ENCODE measurements at regions of chr19 and their contacts with region 1.

Region 1: DNA sequence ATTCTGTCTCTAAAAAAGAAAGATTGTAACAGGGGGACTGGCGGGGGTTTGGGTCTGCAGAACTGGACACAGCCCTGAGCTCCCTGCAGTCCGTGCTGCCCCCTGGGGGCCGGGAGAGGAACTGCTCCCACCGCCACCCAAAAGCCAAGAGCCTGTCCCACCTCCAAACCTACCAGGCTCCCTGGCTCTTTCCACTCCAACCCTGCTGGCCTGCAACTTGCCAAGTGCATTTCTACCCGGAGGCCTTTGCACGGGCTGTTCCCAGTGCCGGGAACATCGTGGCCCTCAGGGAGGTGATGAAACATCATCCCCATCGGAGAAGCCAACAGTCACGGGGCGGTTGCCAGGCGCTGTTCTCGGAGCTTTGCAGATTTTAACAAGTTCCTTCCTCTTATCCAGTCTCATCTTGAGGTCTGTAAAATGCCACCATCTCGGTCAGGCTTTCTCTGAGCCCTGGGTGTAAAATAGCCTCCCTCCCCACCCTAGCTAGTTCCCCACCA is 50.7 kb downstream of the SMIM24 start:
- DNase-seq: peak; percentile 38
- H3K4me3 ChIP-seq: no peak overlapping the region
- H3K27me3 ChIP-seq: no peaks in the 10 kb centered on the region
- CTCF ChIP-seq: peak; percentile 97

Region 2: GRCh38 chr19:3324321-3324856 is 105.2 kb before region 1 on chr19:
- CTCF ChIA-PET with region 1: interaction called, 41 read pairs
- POLR2A ChIA-PET with region 1: no interaction called
- DNase-seq: no peak
- H3K4me3 ChIP-seq: no peak overlapping the region
- H3K27me3 ChIP-seq: peaks cover 6% of the 10 kb centered on the region; the same call in 1 of the 2 replicates
- CTCF ChIP-seq: peak; percentile 83

Region 3: GRCh38 chr19:3336680-3337523 is 92.7 kb before region 1 on chr19:
- CTCF ChIA-PET with region 1: interaction called, 13 read pairs
- POLR2A ChIA-PET with region 1: no interaction called
- DNase-seq: no peak
- H3K4me3 ChIP-seq: no peak overlapping the region
- H3K27me3 ChIP-seq: no peaks in the 10 kb centered on the region
- CTCF ChIP-seq: no peak

Region 4: DNA sequence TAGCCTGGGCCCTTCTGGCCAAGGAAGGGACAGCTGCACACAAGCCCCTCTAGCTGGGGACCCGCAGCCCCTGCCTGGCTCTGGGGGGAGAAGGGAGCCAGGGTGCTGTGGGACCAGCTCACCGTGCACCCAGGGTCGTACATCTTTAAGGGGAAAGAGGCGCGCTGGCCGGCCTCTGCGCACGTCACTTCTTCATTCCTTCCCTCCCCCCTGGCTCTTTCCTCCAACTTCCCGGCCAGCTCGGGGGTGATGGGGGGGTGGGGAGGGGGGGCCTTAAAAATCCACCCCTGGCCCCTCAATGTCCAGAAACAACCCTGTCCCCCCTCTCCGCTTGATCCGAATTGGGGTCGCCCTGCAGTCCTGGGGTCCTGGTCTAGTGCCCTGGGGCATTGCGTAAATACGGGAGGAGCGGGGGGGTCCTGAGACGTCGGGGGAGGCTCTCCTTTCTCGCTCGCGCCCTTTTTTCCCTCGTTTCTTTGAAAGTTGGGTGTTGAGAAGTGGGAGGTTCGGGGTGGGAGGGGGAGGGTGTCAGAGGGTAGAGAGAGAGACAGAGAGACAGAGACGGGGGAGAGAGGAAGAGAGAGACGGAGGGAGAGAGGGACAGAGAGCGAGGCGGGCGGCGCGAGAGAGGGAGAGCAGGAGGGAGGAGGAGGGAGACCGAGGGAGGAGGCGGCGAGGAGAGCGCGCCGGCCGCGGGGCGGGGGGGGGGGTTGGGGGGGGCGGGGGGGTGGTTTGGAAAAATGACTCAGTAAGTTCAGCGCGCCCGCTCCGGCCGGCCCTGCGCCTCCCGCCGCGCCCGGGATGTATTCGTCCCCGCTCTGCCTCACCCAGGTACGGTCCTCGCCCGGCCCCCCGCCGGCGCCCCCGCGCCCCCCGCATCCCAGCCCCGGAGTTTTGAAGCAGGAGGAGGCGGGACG is 63.5 kb before region 1 on chr19 and contains the start of gene NFIC:
- CTCF ChIA-PET with region 1: interaction called, 11 read pairs
- POLR2A ChIA-PET with region 1: no interaction called
- DNase-seq: no peak
- H3K4me3 ChIP-seq: peak within 1 kb of the TSS; percentile 88
- H3K27me3 ChIP-seq: no peaks in the 10 kb centered on the region
- CTCF ChIP-seq: no peak
- polyA plus RNA-seq, gene NFIC: 3.7 and 5.0 TPM in 2 replicates

Region 5: GRCh38 chr19:3411636-3412035 is 18.0 kb before region 1 on chr19:
- CTCF ChIA-PET with region 1: interaction called, 11 read pairs
- POLR2A ChIA-PET with region 1: interaction called, 3 read pairs
- DNase-seq: no peak
- H3K4me3 ChIP-seq: no peak overlapping the region
- H3K27me3 ChIP-seq: no peaks in the 10 kb centered on the region
- CTCF ChIP-seq: no peak

Region 6: GRCh38 chr19:3471954-3472655 is 42.5 kb after region 1 on chr19:
- CTCF ChIA-PET with region 1: interaction called, 14 read pairs
- POLR2A ChIA-PET with region 1: no interaction called
- DNase-seq: no peak
- H3K4me3 ChIP-seq: no peak overlapping the region
- H3K27me3 ChIP-seq: no peaks in the 10 kb centered on the region
- CTCF ChIP-seq: peak; percentile 95

Region 7: GRCh38 chr19:3494051-3494450 is 64.4 kb after region 1 on chr19:
- CTCF ChIA-PET with region 1: no interaction called
- POLR2A ChIA-PET with region 1: no interaction called
- DNase-seq: no peak
- H3K4me3 ChIP-seq: no peak overlapping the region
- H3K27me3 ChIP-seq: no peaks in the 10 kb centered on the region
- CTCF ChIP-seq: no peak

Measured in BJ (cell line).